Natural killer cell (primary cell): ENCODE measurements at regions of chr7 and their contacts with region 1.

Region 1: GRCh38 chr7:30322271-30323005 is 38.0 kb downstream of the ZNRF2 start:
- DNase-seq: peak in 1 of 2 donors; percentile 70
- ATAC-seq: peak; percentile 85 to 94 (median 91)
- H3K4me3 ChIP-seq: peak overlapping the region; percentile 30
- H3K4me3 Mint-ChIP-seq: peak overlapping the region; percentile 91
- H3K27ac ChIP-seq: peak overlapping the region; percentile 87
- H3K27ac Mint-ChIP-seq: peak overlapping the region; percentile 97 to 98
- H3K4me1 ChIP-seq: peaks cover 11% of the 10 kb centered on the region
- H3K4me1 Mint-ChIP-seq: peaks cover 57 to 63% of the 10 kb centered on the region in 2 donors
- H3K27me3 ChIP-seq: no peaks in the 10 kb centered on the region
- H3K27me3 Mint-ChIP-seq: no peaks in the 10 kb centered on the region
- CTCF ChIP-seq: no peak

Region 2: GRCh38 chr7:30284298-30285066 is 38.0 kb before region 1 on chr7 and contains the start of gene ZNRF2:
- intact Hi-C with region 1: loop called (anchors 2 kb)
- DNase-seq: peak; percentile 96 to 100
- ATAC-seq: peak; percentile 81 to 94 (median 83)
- H3K4me3 ChIP-seq: peak within 1 kb of the TSS; percentile 65
- H3K4me3 Mint-ChIP-seq: peak within 1 kb of the TSS; percentile 84
- H3K27ac ChIP-seq: peak within 1 kb of the TSS; percentile 90
- H3K27ac Mint-ChIP-seq: peak within 1 kb of the TSS; percentile 89 to 98
- H3K4me1 ChIP-seq: peaks cover 8% of the 10 kb centered on the region
- H3K4me1 Mint-ChIP-seq: peaks cover 52 to 53% of the 10 kb centered on the region in 2 donors
- H3K27me3 ChIP-seq: no peaks in the 10 kb centered on the region
- H3K27me3 Mint-ChIP-seq: no peaks in the 10 kb centered on the region
- CTCF ChIP-seq: peak; percentile 25
- total RNA-seq, gene ZNRF2: 35.0 to 43.7 (median 36.3) TPM

Region 3: DNA sequence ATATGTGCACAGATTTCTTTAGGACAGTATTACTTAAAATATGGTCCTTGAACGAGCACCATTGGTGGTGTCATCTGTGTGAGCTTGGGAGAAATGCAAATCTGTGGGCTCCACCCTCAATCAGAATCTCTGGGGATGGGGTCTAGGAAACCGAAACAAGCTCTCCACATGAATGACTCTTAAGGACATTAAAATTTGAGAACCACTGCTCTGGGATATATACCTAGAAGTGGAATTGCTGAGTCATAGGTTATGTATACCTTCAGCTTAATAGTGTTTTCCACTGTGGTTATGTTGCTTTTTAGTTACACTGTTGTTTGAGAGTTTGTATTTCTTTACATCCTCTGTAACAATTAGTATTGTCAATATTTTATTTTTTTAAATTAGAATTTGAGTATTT is 14.0 kb before region 1 on chr7:
- intact Hi-C with region 1: loop called (anchors 2 kb)
- DNase-seq: no peak
- ATAC-seq: peak in 1 of 3 donors; percentile 57
- H3K4me3 ChIP-seq: no peak overlapping the region
- H3K4me3 Mint-ChIP-seq: peak overlapping the region; percentile 1
- H3K27ac ChIP-seq: no peak overlapping the region
- H3K27ac Mint-ChIP-seq: no peak overlapping the region
- H3K4me1 ChIP-seq: peaks cover 2% of the 10 kb centered on the region
- H3K4me1 Mint-ChIP-seq: peaks cover 64 to 70% of the 10 kb centered on the region in 2 donors
- H3K27me3 ChIP-seq: no peaks in the 10 kb centered on the region
- H3K27me3 Mint-ChIP-seq: no peaks in the 10 kb centered on the region
- CTCF ChIP-seq: no peak

Region 4: GRCh38 chr7:30412810-30413504 is 90.5 kb after region 1 on chr7:
- intact Hi-C with region 1: no loop called
- DNase-seq: peak in 1 of 2 donors; percentile 63
- ATAC-seq: peak in 2 of 3 donors; percentile 69 to 76
- H3K4me3 ChIP-seq: no peak overlapping the region
- H3K4me3 Mint-ChIP-seq: no peak overlapping the region
- H3K27ac ChIP-seq: no peak overlapping the region
- H3K27ac Mint-ChIP-seq: no peak overlapping the region
- H3K4me1 ChIP-seq: no peaks in the 10 kb centered on the region
- H3K4me1 Mint-ChIP-seq: no peaks in the 10 kb centered on the region
- H3K27me3 ChIP-seq: no peaks in the 10 kb centered on the region
- H3K27me3 Mint-ChIP-seq: no peaks in the 10 kb centered on the region
- CTCF ChIP-seq: peak; percentile 38